ENCODE measurements at regions of chr4 and their contacts with region 1.

Region 1: DNA sequence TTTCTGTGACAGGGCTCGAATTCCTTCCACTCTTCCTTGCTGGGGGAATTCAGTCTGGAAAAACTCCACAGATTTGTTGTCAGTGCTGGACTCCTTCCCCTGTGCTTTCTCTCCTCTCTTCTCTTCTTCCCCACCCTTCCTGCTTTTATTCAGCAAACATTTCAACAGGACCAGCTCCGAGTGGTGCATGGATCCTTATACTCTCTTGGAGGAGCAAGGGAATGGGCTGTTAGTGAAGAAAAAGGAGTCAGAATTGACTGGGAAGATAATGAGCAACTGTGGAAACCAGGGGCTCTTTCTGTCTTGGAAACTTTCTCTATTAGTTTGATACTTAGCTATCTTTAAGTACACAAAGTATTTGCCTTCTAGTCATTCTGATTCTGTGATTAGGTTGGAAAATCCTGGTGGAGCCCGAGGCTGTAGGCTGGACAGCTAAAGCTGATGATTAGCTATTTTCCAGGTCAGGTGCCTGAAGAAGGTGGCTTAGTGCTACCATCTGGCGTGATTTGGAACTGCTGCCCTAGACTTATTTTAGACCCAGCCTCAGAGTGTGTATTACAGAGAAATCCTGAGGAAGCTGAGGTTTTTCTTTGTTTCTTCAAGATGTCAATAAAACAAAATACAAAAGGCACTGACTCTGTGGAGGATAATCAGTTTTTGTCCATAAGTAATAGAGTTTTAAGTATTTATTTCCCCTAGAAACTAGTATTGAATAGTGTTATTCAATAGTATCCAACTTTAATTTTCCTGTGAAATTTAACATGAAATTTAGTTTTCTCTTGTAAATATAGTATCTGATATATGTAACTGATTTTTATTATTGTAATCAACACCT is 38.4 kb downstream of the NAP1L5 start:
- DNase-seq: peak; percentile 34
- ATAC-seq: peak; percentile 97

Region 2: DNA sequence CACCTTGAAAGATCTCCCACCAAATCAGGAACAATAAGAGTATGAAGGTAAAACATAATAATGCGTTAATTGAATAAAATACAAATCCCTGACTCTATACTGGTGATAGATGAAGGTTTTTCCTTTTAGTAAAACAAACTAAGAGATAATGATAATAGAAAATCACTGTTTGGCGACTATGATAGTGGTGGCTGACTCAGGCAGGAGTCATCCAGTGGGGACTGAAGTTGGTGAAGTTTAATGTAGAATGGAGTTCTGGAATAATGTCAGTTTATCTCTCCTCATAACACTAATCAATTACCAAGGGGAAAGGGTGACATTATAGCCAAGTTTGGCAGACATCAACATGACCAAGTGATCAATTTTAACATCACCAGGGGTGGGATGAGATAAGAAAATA is 522.2 kb before region 1 on chr4:
- intact Hi-C with region 1: no loop called
- DNase-seq: no peak
- ATAC-seq: no peak

Region 3: GRCh38 chr4:88456757-88457306 is 202.4 kb before region 1 on chr4 and contains the start of gene HERC5:
- intact Hi-C with region 1: no loop called
- DNase-seq: peak; percentile 92
- ATAC-seq: peak; percentile 96
- total RNA-seq, gene HERC5: 2.0 TPM

Region 4: DNA sequence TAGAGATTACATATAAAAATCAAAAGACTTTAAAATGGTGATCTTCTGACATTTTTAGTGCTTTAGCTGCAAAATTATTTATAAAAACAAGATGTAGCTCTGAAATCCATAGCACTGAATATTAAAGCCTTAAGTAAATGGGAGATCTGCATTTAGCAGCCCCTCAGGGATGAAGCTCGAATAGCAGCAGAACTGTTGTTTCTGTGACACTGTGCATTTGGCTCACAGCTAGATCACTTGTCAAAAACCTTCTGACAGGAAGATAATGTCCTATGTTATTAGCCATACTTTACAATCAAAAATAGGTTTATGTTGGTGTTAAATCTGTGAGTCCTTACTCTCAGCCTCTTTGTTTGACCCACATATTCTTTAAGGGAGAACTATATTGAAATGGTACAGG is 121.6 kb before region 1 on chr4:
- intact Hi-C with region 1: loop called (anchors 2 kb)
- DNase-seq: no peak
- ATAC-seq: no peak

Region 5: GRCh38 chr4:88591787-88592599 is 67.3 kb before region 1 on chr4 and contains the start of gene HERC3:
- intact Hi-C with region 1: loop called (anchors 10 kb)
- DNase-seq: peak; percentile 96
- ATAC-seq: peak; percentile 98
- total RNA-seq, gene HERC3: 61.9 TPM

Region 6: DNA sequence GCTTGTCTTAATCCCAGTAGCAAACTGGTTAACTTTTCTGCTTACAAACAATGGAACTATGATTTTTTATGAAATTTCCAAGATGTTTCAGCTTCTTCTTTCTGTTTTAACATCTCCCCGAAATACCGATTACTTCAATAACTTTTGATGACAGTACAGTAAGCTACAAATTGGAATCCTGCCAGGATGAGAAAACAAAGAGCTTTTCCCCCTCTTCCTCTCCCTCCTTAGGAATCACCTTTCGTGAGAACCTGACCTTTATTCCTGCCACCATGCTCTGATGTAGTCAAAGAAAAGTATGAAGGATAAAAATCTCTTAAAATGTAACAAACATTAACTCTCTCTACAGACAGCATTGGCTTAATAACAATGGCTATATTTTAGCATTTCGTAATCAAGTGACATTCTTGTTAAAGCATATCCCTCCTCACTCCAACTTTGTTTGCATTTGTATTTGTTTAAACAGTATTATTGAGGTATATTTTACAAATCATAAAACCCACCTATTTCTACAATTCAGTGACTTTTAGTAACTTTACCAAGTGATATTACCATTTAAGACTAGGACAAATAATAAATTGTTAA is 187.0 kb after region 1 on chr4:
- intact Hi-C with region 1: no loop called
- DNase-seq: no peak
- ATAC-seq: no peak

Measured in left ventricle myocardium superior (tissue), 1 donor.